K562 (cell line): ENCODE measurements at regions of chr12 and their contacts with region 1.

Region 1: DNA sequence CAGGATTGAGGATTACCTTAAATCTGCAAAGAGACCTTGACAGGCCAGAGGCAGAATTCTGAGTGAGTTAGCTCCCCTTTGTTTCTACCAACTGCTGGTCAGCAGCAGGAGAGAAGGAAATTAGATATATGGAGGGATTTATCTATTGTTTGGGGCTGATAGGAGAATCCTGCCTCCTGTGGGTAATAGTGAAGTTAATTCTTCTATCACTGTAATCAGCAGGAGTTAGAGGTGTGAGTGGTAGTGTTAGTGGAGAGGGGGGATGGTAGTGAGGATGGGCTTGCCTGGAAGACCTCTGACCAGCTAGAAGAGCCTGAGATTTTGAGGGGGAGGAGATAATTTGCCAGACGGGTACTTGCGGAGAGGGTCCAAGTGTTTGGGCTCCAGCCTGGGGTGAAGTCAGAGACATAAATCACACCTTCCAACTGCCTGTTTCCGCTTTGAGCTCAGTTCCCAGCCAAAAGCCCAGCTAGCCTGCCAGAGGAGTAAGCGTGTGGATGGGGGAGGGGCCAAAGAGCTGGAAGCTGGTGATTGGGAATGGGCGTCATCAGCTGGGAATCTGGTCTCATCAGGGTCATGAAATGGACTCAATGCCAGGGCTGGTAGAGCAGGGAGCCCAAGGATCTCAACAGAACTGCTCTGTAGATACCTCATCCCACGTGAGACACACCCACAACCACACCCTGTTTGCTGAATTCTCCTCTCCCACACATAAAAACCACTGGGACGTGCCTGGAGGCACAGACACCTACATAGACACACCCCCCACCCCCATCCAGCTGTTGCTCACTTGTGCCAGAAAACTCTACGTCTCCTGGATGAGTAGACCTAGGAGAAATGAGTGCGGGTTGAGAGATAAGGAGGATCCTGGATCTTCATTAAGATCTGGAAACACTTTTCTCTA is 13.1 kb upstream of the ITGA5 start:
- DNase-seq: peak; percentile 71 to 89 (median 86)
- ATAC-seq: peak; percentile 83
- H3K4me3 ChIP-seq: no peak overlapping the region
- H3K27ac ChIP-seq: peak overlapping the region; percentile 29; the same call in 2 of the 3 replicates
- H3K4me1 ChIP-seq: peaks cover 24 to 51% of the 10 kb centered on the region in 2 experiments
- H3K27me3 ChIP-seq: no peaks in the 10 kb centered on the region
- CTCF ChIP-seq: no peak
- EP300 ChIP-seq: no peak; the same call in none of the 2 replicates
- POLR2A ChIP-seq: no peak
- RAD21 ChIP-seq: no peak

Region 2: DNA sequence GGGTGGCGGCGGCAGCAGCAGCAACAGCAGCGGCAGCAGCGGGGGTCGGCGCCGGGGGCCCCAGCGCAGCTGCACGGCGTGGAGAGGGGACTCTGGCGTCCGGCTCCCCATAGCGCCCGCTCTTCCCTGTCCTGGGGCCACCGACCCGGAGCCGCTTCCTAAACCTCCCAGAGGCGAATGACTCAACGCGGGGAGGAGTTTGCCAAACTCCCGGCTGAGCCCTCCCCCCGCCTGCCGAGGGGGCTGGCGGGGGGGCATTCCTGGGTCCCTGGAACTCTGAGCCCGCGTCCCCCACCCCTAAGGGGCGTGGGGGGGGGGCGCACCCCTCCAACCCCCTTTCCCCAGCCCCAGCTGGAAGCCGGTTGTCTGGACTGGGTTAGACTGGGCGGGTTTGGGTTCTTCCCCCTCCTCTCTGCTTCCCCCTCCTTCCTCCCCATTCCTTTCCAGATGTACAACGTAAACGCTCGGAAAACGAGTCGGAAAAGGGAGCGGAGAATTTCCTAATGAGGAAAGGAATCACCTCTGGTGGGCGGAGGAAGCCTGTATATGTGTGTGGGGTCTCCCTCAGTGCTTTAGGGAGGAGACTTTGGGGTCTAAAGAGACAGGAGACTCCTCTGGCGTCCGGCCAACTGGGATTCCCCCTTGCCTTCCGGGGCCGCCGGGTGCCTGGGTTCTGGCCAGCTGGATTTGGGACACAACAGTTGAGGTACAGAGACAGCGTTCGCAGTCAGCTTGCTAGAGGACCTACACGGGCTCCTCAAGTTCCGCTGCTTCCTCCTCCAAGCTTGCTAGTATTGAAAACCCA is 12.9 kb before region 1 on chr12 and contains the start of gene ITGA5:
- CTCF ChIA-PET with region 1: no interaction called
- POLR2A ChIA-PET with region 1: interaction called, 6 read pairs
- in situ Hi-C with region 1: no loop called
- intact Hi-C with region 1: loop called (anchors 2 kb)
- DNase-seq: peak; percentile 79 to 82 (median 81)
- ATAC-seq: peak; percentile 68
- H3K4me3 ChIP-seq: peak within 1 kb of the TSS; percentile 100
- H3K27ac ChIP-seq: peak within 1 kb of the TSS; percentile 88
- H3K4me1 ChIP-seq: peaks cover 60 to 69% of the 10 kb centered on the region in 2 experiments
- H3K27me3 ChIP-seq: no peaks in the 10 kb centered on the region
- CTCF ChIP-seq: no peak
- EP300 ChIP-seq: no peak; the same call in 1 of the 2 replicates
- POLR2A ChIP-seq: peak; percentile 77
- RAD21 ChIP-seq: no peak
- polyA plus RNA-seq, gene ITGA5: 9.1 to 9.2 TPM

Region 3: DNA sequence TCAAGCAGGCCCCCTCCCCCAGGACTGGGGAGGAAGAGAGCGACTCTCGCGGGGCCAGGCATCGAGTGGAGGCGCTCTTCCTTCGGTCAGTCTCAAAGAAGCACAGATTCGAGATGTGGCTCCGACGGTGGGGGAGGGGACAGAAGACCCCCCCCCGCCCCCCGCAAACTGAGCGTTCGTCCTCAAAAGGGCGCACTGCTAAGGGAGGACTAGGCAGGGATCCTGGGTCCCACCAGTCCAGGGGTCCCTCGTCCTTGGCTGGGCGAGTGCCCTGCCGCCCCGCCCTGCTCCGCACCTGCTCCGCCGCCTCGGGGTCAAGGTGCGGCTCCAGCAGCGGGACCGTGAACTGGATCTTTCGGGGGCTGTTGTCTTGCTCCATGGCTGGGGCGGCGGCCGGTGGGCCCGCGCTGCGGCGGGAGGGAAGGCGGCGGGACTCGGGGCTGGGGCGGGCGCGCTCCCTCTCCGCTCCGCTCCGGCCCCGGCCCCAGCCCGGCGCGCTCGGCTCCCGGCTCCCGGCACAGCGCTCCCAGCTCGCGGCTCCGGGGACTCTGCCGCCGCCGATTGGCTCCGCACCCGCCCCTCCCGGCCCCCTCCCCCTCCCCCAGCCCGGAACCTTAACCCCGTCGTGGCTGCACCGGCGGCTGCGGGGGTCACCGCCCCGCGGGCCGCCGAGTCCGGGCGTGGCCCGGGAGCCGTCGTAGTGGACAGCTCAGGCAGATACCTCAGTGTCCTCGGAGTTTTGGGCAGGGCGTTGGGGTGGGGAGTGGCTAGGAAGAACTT is 156.1 kb after region 1 on chr12 and contains the start of gene PPP1R1A:
- CTCF ChIA-PET with region 1: no interaction called
- POLR2A ChIA-PET with region 1: no interaction called
- in situ Hi-C with region 1: no loop called
- intact Hi-C with region 1: no loop called
- DNase-seq: peak in 2 of 4 experiments; percentile 64 to 65
- ATAC-seq: no peak; the same call in 1 of the 3 replicates
- H3K4me3 ChIP-seq: no peak within 1 kb of the TSS
- H3K27ac ChIP-seq: no peak within 1 kb of the TSS
- H3K4me1 ChIP-seq: peaks cover 0 to 9% of the 10 kb centered on the region in 2 experiments; a peak in 1 of 5 replicates
- H3K27me3 ChIP-seq: peaks cover 38 to 79% of the 10 kb centered on the region in 2 experiments
- CTCF ChIP-seq: no peak
- EP300 ChIP-seq: no peak
- POLR2A ChIP-seq: no peak
- RAD21 ChIP-seq: no peak
- polyA plus RNA-seq, gene PPP1R1A: not detected